GM10248 (cell line): ENCODE measurements at regions of chr17 and their contacts with region 1.

Region 1: DNA sequence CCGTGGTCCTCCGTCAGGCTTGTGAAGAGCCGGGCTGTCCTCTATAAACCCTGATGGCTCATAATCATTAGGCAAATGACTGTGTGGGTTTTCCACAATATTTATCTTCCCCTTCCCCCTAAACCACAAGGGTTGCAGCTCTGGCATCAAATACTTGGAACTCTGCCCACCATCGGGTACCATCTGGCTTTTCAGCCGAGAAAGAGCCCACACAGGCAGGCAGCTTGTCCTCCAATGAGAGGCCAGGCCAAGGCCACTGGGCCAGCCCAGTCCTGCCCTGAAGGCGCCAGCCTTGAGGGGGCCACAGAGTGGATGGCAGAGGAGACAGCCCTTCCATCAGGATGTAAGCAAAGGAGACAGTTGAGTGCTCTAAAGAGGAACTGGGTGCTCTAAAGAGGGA is 31.8 kb upstream of the NAT9 start:
- DNase-seq: no peak
- CTCF ChIP-seq: no peak

Region 2: DNA sequence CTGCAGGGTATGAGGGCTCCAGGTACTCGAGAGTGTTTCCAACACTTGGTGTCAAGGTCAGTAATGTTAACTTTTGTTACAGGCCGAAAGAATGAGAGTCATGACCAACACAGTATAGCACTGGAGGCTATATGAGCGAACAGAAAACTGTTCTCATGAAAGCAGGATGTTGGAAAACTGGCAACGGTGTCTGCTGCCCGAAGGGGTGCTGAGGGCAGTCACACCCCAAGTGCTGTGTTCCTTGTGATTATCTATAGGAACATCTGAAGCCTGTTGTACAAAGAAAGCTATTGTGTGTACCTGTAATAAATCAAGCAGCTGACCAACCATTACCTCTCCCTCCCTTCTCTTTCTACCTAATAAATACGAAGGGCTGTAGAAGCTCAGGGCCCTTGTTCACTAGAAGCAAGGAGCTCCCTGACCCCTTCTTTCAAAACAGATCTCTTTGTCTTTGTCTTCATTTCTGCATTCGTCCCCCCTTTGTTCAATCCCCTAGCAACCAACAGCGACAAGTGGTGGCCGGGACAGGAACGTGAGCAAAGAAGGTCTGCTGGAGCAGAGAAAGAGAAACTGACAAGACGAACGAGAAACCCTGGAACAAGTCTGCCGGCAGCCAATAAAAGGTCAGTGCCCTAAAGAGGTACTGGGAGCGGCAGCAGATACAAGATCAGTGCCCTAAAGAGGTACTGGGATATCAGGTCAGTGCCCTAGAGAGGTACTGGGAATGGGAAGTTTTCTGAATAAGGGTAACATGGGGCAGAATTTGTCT is 223.4 kb before region 1 on chr17:
- CTCF ChIA-PET with region 1: no interaction called
- POLR2A ChIA-PET with region 1: no interaction called
- DNase-seq: no peak
- CTCF ChIP-seq: no peak

Region 3: DNA sequence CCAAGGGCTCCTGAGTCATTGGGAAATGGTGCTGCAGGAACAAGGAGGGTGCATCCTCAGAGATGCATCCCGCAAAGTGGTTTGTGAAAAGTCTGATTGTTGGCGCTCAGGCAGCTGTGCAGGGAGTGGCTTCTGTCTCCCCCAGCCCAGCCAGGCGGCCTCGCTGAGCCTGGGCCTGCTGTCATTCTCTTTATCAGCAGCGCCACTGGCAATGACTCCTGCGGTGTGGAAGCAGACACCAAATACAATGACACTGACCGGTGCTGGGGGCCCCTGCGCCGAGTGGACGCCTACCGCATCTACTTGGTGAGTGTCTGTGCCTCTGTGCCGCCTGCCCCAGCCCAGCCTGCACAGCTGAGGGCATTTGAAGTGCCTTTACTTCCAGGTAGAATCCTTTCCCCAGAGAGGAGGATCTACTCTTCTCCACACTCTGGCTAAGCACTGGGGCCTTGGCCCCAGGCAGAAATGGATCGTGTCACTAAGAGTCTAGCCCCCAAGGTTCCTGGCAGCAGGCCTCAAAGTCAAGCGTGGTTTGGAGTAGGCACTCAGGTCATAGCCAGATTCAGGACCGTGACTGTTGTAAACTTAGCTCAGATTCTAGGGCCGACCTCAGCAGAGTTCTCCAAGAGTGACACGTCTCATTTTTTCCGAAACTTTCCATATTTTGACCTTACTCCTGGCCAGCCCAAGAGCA is 12.5 kb before region 1 on chr17:
- CTCF ChIA-PET with region 1: interaction called, 22 read pairs
- POLR2A ChIA-PET with region 1: no interaction called
- DNase-seq: no peak
- CTCF ChIP-seq: no peak

Region 4: GRCh38 chr17:76091526-76092285 is 1283.8 kb after region 1 on chr17:
- CTCF ChIA-PET with region 1: no interaction called
- POLR2A ChIA-PET with region 1: interaction called, 10 read pairs
- DNase-seq: no peak
- CTCF ChIP-seq: no peak